ENCODE measurements at regions of chr1 and their contacts with region 1.

Region 1: GRCh38 chr1:36134505-36135329 is 9.7 kb upstream of the COL8A2 start:
- DNase-seq: peak in 7 of 10 donors; percentile 36 to 76 (median 49)
- ATAC-seq: peak; percentile 52 to 89
- H3K4me3 Mint-ChIP-seq: no peak overlapping the region
- H3K27ac Mint-ChIP-seq: peak overlapping the region; percentile 29 to 79 (median 70)
- H3K4me1 Mint-ChIP-seq: peaks cover 6 to 15% (median 9%) of the 10 kb centered on the region in 4 donors
- H3K27me3 Mint-ChIP-seq: no peaks in the 10 kb centered on the region

Region 2: DNA sequence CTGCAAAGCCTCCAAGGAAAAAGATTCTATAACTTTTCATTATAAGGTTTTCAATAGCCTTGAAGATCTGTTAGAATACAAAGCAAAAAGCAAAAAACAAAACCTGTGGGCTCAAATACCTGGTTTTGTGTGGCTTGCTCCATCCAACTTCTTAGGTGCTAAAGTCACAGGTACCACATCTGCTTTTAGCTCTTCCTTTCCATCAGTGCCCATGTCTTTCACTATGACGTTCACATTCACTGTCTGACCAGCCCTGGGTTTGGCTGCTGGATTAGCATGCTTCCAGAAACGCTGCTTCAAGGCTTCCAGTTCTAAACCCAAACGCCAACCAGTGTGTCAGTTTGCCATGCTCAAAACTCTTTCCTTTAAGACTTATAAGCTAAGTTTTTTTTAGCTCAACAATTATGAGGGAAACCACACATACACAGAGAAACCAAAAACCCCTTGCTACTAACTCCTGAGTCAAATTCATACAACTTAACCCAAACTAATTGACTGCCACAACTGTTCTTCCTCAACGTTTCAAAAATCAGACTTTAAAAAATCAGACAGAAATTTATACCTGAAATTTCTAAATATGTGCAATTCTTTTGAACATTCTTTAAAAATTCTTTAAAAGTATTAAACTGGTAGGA is 381.0 kb before region 1 on chr1:
- POLR2A ChIA-PET with region 1: no interaction called
- DNase-seq: no peak
- ATAC-seq: no peak
- H3K4me3 Mint-ChIP-seq: no peak overlapping the region
- H3K27ac Mint-ChIP-seq: peak overlapping the region in 1 of 10 donors; percentile 80
- H3K4me1 Mint-ChIP-seq: no peaks in the 10 kb centered on the region
- H3K27me3 Mint-ChIP-seq: peaks cover 0 to 9% (median 0%) of the 10 kb centered on the region in 5 donors

Region 3: GRCh38 chr1:35835398-35835797 is 299.3 kb before region 1 on chr1:
- POLR2A ChIA-PET with region 1: no interaction called
- DNase-seq: no peak
- ATAC-seq: no peak
- H3K4me3 Mint-ChIP-seq: no peak overlapping the region
- H3K27ac Mint-ChIP-seq: no peak overlapping the region
- H3K4me1 Mint-ChIP-seq: no peaks in the 10 kb centered on the region
- H3K27me3 Mint-ChIP-seq: no peaks in the 10 kb centered on the region

Region 4: DNA sequence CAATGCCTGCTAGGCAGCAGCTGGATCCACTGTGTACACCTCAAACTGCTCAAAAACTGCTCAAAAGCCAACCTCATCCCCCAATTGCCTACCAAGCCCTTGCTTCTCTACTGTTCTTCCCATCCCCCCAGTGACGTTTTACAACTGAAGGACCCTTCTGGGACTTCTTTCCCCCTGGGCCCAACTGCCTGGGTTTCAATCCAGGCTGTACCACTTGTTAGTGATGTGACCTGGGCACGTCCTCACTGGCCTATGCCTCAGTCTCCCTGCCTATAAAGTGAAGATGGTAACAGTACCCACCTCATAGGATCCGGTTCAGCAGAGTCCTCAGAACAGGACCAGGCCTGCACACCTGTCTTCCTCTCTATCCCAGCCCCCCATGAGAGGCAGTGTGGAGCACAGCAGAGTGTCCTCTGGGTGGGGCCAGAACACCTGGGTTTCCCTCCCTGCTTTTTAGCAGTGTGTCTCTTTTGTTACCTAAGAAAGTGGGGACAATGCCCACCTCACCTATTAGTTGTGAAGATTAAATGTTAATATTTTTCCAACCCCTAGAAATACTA is 52.7 kb before region 1 on chr1:
- POLR2A ChIA-PET with region 1: no interaction called
- DNase-seq: no peak
- ATAC-seq: no peak
- H3K4me3 Mint-ChIP-seq: no peak overlapping the region
- H3K27ac Mint-ChIP-seq: peak overlapping the region in 1 of 10 donors; percentile 4
- H3K4me1 Mint-ChIP-seq: peaks cover 0 to 6% (median 4%) of the 10 kb centered on the region in 4 donors
- H3K27me3 Mint-ChIP-seq: peaks cover 11 to 50% (median 19%) of the 10 kb centered on the region in 5 donors

Region 5: GRCh38 chr1:36098650-36099365 is 35.9 kb before region 1 on chr1:
- POLR2A ChIA-PET with region 1: interaction called, 10 read pairs
- DNase-seq: peak in 1 of 10 donors; percentile 60
- ATAC-seq: no peak
- H3K4me3 Mint-ChIP-seq: no peak overlapping the region
- H3K27ac Mint-ChIP-seq: no peak overlapping the region
- H3K4me1 Mint-ChIP-seq: peaks cover 6 to 13% (median 7%) of the 10 kb centered on the region in 4 donors
- H3K27me3 Mint-ChIP-seq: no peaks in the 10 kb centered on the region